ENCODE measurements at regions of chr15 and their contacts with region 1.

Region 1: GRCh38 chr15:40405501-40406381 is at the start of gene IVD:
- DNase-seq: peak; percentile 79 to 95 (median 91)
- ATAC-seq: peak; percentile 99
- H3K4me3 ChIP-seq: peak within 1 kb of the TSS; percentile 81 to 85
- H3K4me3 Mint-ChIP-seq: peak within 1 kb of the TSS; percentile 81
- H3K27ac ChIP-seq: peak within 1 kb of the TSS; percentile 67 to 69
- H3K27ac Mint-ChIP-seq: peak within 1 kb of the TSS; percentile 74
- H3K4me1 ChIP-seq: peaks cover 21% of the 10 kb centered on the region
- H3K4me1 Mint-ChIP-seq: peaks cover 37% of the 10 kb centered on the region
- H3K27me3 ChIP-seq: no peaks in the 10 kb centered on the region
- H3K27me3 Mint-ChIP-seq: no peaks in the 10 kb centered on the region
- CTCF ChIP-seq: no peak
- total RNA-seq, gene IVD: 46.6 to 54.9 TPM

Region 2: GRCh38 chr15:40323239-40323952 is 82.3 kb before region 1 on chr15 and contains the start of gene INAFM2:
- CTCF ChIA-PET with region 1: interaction called, 3 read pairs
- POLR2A ChIA-PET with region 1: no interaction called
- intact Hi-C with region 1: loop called in 1 of 2 experiments (anchors 1 kb)
- DNase-seq: peak; percentile 79 to 97 (median 93)
- ATAC-seq: peak; percentile 90
- H3K4me3 ChIP-seq: peak within 1 kb of the TSS; percentile 34 to 45
- H3K4me3 Mint-ChIP-seq: peak within 1 kb of the TSS; percentile 80
- H3K27ac ChIP-seq: peak within 1 kb of the TSS in 1 of 2 experiments; percentile 47
- H3K27ac Mint-ChIP-seq: peak within 1 kb of the TSS; percentile 74
- H3K4me1 ChIP-seq: peaks cover 21% of the 10 kb centered on the region
- H3K4me1 Mint-ChIP-seq: peaks cover 22% of the 10 kb centered on the region
- H3K27me3 ChIP-seq: no peaks in the 10 kb centered on the region
- H3K27me3 Mint-ChIP-seq: no peaks in the 10 kb centered on the region
- CTCF ChIP-seq: peak; percentile 60
- total RNA-seq, gene INAFM2: 4.3 to 8.1 TPM

Region 3: DNA sequence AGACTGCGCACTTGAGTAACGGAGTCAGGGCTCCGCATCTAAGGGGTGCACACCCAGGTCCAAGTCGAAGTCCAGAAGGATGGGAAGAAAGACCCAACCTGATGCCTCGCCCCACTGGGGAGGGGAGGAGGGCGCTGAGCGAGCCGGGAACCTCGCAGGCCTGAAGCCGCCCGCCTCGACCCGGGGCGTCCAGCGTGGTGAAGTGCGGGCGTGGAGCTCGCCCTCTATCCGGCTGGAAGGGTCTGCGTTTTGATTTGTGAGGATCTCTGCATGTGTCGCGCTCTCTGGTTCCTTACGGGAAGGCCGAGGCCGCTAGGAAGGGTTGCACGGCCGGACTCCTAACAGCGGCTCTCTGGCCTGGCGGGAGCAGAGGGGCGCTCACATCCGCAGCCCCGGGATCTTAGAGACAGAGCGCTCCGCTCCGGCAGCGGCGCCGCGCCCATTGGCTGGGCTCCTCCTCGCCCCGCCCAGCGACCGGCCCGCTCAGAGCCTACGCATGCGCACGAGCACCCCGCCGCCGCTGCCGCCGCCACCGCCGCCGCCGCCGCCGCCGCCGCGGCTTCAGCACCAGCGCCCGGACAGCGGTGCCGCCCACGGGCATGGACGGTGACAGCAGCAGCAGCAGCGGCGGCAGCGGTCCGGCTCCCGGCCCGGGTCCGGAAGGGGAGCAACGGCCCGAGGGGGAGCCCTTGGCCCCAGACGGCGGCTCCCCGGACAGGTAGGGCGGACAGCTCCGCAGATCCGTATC is 47.8 kb before region 1 on chr15 and contains the start of gene DISP2:
- CTCF ChIA-PET with region 1: no interaction called
- POLR2A ChIA-PET with region 1: interaction called, 3 read pairs
- intact Hi-C with region 1: loop called (anchors 1 to 5 kb)
- DNase-seq: peak; percentile 82 to 93 (median 88)
- ATAC-seq: peak; percentile 94
- H3K4me3 ChIP-seq: peak within 1 kb of the TSS; percentile 63 to 65
- H3K4me3 Mint-ChIP-seq: peak within 1 kb of the TSS; percentile 83
- H3K27ac ChIP-seq: no peak within 1 kb of the TSS
- H3K27ac Mint-ChIP-seq: no peak within 1 kb of the TSS
- H3K4me1 ChIP-seq: peaks cover 13% of the 10 kb centered on the region
- H3K4me1 Mint-ChIP-seq: peaks cover 9% of the 10 kb centered on the region
- H3K27me3 ChIP-seq: no peaks in the 10 kb centered on the region
- H3K27me3 Mint-ChIP-seq: peaks cover 2% of the 10 kb centered on the region
- CTCF ChIP-seq: no peak
- total RNA-seq, gene DISP2: 0.05 to 0.25 TPM

Region 4: DNA sequence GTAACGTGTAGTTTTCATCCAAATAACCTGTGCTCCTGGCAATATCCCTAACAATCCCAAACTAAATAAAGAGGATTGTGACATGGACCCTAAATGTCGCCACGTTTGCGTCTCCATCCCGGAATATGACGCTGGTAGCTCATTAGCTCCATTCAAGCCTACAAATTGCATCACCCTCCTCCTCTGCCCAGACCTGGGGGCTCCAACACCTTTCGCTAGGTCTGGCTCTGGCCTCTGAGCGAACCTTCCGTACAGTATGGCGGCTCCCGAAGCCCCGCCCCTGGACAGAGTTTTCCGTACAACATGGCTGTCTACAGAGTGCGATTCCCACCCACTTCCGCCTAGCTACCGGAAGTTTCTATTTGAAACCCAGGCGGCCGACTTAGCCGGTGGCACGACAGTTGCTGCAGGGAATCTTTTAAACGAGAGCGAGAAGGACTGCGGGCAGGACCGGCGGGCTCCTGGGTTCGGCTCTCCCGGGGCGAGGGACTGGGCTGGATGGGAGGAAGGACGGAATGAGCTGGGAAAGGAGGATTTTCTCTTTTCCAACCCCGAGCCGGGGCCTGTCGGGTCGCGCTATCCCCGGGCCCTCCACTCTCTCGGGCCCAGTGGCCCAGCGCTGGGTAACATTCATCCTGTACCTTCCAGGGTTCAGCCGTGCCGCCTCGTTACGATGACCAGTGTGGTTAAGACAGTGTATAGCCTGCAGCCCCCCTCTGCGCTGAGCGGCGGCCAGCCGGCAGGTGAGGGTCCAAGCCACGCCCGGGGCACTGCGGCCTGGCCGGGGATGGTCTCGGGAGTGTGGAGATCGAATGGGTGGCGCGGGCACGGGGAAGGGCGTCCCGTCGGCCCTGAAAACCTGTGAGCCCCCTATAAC is 22.9 kb before region 1 on chr15 and contains the start of gene KNSTRN:
- CTCF ChIA-PET with region 1: interaction called, 3 read pairs
- POLR2A ChIA-PET with region 1: interaction called, 7 read pairs
- intact Hi-C with region 1: loop called (anchors 1 kb)
- DNase-seq: peak; percentile 84 to 95 (median 93)
- ATAC-seq: peak; percentile 99
- H3K4me3 ChIP-seq: peak within 1 kb of the TSS; percentile 73 to 93
- H3K4me3 Mint-ChIP-seq: peak within 1 kb of the TSS; percentile 99
- H3K27ac ChIP-seq: peak within 1 kb of the TSS in 1 of 2 experiments; percentile 54
- H3K27ac Mint-ChIP-seq: peak within 1 kb of the TSS; percentile 81
- H3K4me1 ChIP-seq: peaks cover 13% of the 10 kb centered on the region
- H3K4me1 Mint-ChIP-seq: peaks cover 16% of the 10 kb centered on the region
- H3K27me3 ChIP-seq: no peaks in the 10 kb centered on the region
- H3K27me3 Mint-ChIP-seq: no peaks in the 10 kb centered on the region
- CTCF ChIP-seq: no peak
- total RNA-seq, gene KNSTRN: 3.8 to 5.4 TPM

Region 5: DNA sequence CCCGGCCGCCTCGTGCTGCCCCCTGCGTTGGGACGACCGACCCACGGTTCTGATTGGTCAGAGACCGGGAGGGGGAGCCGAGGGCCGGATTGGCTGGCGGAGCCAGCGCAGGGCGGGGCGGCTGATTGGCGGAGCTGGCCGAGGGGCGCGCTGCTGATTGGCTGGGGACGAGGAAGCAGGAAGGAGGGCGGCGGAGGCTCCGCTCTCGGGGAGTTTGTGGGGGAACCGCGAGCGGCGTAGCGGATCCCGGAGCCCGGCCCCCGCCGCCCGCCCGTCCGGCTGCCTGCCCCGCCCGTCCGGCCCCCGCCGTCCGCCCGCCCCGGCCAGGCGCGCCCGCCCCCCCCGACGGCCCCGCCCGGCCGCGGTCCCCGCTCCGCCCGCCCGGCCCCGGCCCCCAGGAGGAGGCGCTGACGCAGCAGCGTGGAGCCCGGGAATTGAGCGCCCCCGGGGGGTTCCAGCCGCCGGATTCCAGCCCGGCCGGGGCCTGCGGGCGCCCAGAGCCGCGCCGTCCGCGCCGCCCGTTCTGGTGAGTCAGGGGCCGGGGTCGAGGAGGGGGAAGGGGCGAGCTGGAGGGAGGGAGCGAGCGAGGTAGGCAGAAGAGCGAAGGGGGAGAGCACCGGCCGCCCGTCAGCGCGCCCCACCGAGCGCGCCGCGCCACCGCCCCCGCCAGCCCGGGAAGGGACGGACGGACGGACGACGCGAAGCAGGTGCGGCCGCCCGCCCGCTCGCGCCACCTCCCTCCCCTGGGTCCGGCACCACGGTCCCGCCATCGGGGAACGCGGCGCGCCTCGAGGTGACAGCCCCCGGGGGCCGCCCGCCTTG is 35.2 kb after region 1 on chr15 and contains the start of gene BAHD1:
- CTCF ChIA-PET with region 1: interaction called, 4 read pairs
- POLR2A ChIA-PET with region 1: interaction called, 3 read pairs
- intact Hi-C with region 1: loop called in 1 of 2 experiments (anchors 1 kb)
- DNase-seq: peak; percentile 86 to 97 (median 95)
- ATAC-seq: peak; percentile 85
- H3K4me3 ChIP-seq: peak within 1 kb of the TSS; percentile 57 to 60
- H3K4me3 Mint-ChIP-seq: peak within 1 kb of the TSS; percentile 91
- H3K27ac ChIP-seq: peak within 1 kb of the TSS in 1 of 2 experiments; percentile 53
- H3K27ac Mint-ChIP-seq: peak within 1 kb of the TSS; percentile 75
- H3K4me1 ChIP-seq: peaks cover 57% of the 10 kb centered on the region
- H3K4me1 Mint-ChIP-seq: peaks cover 58% of the 10 kb centered on the region
- H3K27me3 ChIP-seq: peaks cover 10 to 13% of the 10 kb centered on the region in 2 experiments
- H3K27me3 Mint-ChIP-seq: peaks cover 12% of the 10 kb centered on the region
- CTCF ChIP-seq: no peak
- total RNA-seq, gene BAHD1: 22.2 to 23.7 TPM